H1 (cell line): ENCODE measurements at regions of chr11 and their contacts with region 1.

Region 1: GRCh38 chr11:96242971-96243647 is 99.9 kb downstream of the MAML2 start:
- DNase-seq: peak; percentile 82 to 83
- H3K4me3 ChIP-seq: peak overlapping the region; percentile 35 to 58 (median 49)
- H3K27ac ChIP-seq: peak overlapping the region; percentile 92
- H3K4me1 ChIP-seq: peaks cover 0 to 8% (median 6%) of the 10 kb centered on the region in 4 experiments; a peak in 5 of 7 replicates
- H3K27me3 ChIP-seq: no peaks in the 10 kb centered on the region
- CTCF ChIP-seq: no peak
- EP300 ChIP-seq: no peak
- POLR2A ChIP-seq: peak; percentile 60 to 85
- RAD21 ChIP-seq: no peak

Region 2: GRCh38 chr11:96254087-96254486 is 11.0 kb after region 1 on chr11:
- CTCF ChIA-PET with region 1: interaction called, 4 read pairs
- POLR2A ChIA-PET with region 1: interaction called, 20 read pairs
- DNase-seq: no peak
- H3K4me3 ChIP-seq: no peak overlapping the region
- H3K27ac ChIP-seq: no peak overlapping the region
- H3K4me1 ChIP-seq: peaks cover 0 to 3% (median 0%) of the 10 kb centered on the region in 4 experiments; a peak in 2 of 7 replicates
- H3K27me3 ChIP-seq: no peaks in the 10 kb centered on the region; a peak in 1 of 7 replicates
- CTCF ChIP-seq: no peak
- EP300 ChIP-seq: no peak
- POLR2A ChIP-seq: no peak
- RAD21 ChIP-seq: no peak